ENCODE measurements at regions of chr2 and their contacts with region 1.

Region 1: GRCh38 chr2:63698825-63699548 is 110.2 kb downstream of the MDH1 start:
- DNase-seq: peak in 3 of 10 donors; percentile 8 to 18 (median 13)

Region 2: GRCh38 chr2:63444565-63445295 is 254.3 kb before region 1 on chr2:
- intact Hi-C with region 1: no loop called
- DNase-seq: no peak

Region 3: DNA sequence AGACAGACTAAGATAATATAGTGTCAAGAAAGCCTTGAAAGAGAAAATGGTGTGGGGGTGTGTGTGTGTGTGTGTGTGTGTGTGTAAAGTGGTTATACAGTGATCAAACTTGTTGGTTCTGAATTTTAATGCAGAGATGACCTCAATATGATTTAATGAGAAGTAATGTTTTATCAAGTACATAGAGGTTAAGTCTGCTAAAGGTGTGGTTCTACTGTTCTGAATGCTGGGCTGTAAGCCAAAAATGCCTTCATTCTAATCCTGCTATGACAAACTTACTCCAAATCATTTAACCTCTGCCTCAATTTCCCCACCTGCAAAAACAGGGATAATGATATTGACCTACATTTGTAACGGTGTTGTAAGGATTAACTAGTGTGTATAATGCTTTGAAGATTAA is 198.6 kb before region 1 on chr2:
- intact Hi-C with region 1: no loop called
- DNase-seq: no peak

Region 4: DNA sequence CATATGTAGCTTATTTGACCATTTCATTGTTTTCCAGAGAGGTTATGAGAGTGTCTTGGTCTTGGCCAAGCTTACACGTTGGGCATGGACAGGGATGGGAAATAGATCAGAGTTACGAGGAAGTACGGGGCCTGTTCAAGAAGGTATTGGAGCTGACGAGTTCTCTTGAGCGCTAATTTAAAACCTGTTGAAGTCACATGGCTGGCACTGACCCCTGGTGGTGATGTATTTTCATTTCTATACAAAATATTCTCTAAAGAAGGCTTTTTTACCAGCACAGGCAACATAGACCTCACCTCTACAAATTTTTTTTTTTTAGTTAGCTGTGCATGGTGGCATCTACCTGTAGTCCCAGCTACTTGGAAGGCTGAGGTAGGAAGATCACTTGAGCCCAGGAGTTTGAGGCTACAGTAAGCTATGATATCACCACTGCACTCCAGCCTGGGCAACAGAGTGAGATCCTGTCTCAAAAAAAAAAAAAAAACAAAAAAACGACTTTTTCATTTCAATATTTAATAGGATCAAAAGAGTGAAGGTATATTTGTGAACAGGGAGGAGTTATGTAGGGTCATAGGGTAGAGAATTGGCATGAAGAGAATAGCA is 162.3 kb after region 1 on chr2:
- intact Hi-C with region 1: loop called (anchors 1 kb)
- DNase-seq: peak in 4 of 10 donors; percentile 39 to 85 (median 46)

Region 5: GRCh38 chr2:63888490-63889402 is 189.8 kb after region 1 on chr2:
- intact Hi-C with region 1: loop called (anchors 2 kb)
- DNase-seq: peak in 5 of 10 donors; percentile 24 to 80 (median 45)

Region 6: DNA sequence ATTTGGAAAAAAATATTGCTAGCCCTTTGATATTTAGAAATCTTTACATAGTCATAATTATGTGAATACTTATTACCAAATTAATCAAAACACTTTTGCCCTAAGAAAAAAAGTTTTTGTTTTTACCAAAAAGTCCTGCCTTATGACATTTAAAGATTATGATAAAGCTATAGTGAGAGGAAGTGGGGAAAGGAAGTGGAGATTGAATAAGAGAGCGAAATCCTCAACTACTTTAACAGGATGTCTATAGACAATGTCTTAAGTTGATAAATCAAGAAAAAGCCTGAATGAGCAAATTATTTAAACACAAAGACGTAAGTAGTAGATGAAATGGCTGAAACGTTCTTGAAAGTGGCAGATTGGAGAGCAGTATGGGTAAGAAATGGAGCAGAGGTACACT is 341.2 kb after region 1 on chr2:
- intact Hi-C with region 1: loop called (anchors 10 kb)
- DNase-seq: no peak

Measured in posterior cingulate gyrus (tissue), 11 donors.